ENCODE measurements at regions of chr2 and their contacts with region 1.

Region 1: DNA sequence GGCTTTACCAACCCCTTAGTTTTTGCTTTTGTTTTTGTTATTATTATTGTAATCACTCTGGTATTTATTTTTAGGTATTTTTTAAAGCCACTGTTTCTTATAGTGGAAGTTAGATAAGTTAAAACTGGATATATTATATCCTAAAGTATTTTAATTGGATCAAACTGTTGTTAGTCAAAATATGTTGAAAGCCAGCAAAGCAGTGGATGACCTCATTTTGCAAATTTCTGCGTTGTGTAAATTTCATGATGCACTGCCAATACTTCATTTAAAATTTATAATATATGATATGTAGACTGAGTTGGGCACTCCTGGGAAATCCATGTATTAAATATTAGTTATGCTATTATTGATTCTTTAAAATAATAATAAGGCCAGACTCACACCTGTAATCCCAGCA is 661.7 kb upstream of the NRXN1 start:
- DNase-seq: no peak
- H3K4me3 ChIP-seq: no peak overlapping the region
- H3K27ac ChIP-seq: no peak overlapping the region
- H3K4me1 ChIP-seq: no peaks in the 10 kb centered on the region
- H3K27me3 ChIP-seq: no peaks in the 10 kb centered on the region
- CTCF ChIP-seq: no peak

Region 2: DNA sequence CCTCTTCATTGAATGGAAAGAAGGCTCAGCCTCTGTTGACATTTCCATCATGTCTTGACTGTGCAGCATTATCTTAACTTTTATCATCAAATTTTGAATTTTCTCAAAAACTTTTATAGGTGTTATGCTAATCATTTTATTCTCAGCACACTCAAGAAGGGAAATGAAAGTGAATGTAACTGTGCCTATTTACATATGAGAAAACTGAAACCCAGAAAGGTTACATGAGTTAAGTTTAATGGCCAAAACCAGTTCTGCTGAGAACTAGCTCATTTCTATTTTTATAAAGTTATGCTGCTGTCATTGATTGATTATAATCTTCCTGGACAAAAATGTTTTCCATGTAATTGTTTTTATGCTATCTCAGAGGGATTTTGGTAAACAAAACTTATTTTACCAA is 42.9 kb before region 1 on chr2:
- intact Hi-C with region 1: loop called (anchors 2 kb)
- DNase-seq: no peak
- H3K4me3 ChIP-seq: no peak overlapping the region
- H3K27ac ChIP-seq: no peak overlapping the region
- H3K4me1 ChIP-seq: no peaks in the 10 kb centered on the region
- H3K27me3 ChIP-seq: no peaks in the 10 kb centered on the region
- CTCF ChIP-seq: no peak

Region 3: DNA sequence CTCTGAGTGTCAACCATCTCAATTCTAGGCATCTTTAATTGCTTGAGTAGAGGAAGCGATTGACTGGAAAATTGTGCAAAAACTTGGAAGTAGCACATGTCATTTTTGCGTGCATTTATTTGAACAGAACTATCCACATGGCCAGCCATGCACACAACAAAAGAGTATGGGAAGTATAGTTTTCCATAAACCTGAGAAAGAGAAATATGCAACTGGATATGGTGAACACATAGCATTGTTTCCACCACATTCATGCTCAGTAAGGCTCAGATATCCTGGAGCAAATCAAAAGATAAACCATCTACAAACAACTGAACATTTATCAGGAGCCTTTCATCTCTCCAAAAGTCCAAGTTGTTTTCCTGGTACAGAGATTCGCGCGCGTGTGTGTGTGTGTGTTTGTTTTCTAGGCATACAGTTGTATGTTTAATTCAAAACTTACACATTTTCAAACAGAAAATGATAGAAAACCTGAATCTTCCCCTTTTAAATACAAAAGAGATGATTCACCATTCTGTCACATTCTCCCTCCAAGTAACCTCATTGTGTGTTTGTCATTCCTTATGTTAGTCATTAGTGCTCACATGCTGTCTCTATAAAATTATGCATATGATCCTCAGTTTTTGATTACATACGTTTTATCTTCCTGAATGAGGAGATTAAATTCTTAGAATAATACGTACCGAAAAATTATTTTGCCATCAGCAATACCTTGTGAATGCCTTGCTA is 118.7 kb after region 1 on chr2:
- intact Hi-C with region 1: no loop called
- DNase-seq: no peak
- H3K4me3 ChIP-seq: no peak overlapping the region
- H3K27ac ChIP-seq: no peak overlapping the region
- H3K4me1 ChIP-seq: no peaks in the 10 kb centered on the region
- H3K27me3 ChIP-seq: no peaks in the 10 kb centered on the region
- CTCF ChIP-seq: no peak